Heart left ventricle (tissue), 16 donors: ENCODE measurements at regions of chr3 and their contacts with region 1.

Region 1: DNA sequence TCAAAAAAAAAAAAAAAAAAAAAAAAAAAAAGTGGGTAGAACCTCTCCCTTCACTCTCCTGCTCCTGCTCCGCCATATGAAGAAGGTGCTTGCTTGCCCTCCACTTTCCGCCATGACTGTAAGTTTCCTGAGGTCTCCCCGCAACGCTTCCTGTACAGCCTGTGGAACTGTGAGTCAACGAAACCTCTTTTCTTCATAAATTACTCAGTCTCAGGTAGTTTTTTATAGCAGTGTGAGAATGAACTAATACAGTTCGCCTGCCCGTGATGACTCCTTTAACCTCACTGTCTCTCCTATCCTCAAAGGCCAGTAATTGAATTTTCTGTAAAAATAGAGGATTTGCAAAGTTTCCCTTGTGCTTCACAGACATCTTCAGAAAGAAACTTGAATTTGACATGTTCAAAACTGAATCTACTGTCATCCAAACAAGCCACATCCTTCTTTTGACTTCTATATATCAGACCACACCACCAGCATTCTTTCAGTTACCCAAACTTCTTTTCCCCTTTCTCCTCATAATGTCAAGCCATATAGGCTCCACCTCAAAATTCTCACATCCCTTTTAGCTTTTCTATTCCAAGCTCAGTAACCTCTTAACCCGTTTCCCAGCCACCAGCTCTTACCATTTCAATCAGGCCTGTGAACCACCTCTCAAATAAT is 44.3 kb downstream of the P2RY1 start:
- DNase-seq: no peak
- ATAC-seq: no peak
- H3K4me3 ChIP-seq: no peak overlapping the region
- H3K27ac ChIP-seq: no peak overlapping the region
- H3K4me1 ChIP-seq: no peaks in the 10 kb centered on the region
- H3K27me3 ChIP-seq: no peaks in the 10 kb centered on the region
- CTCF ChIP-seq: no peak
- POLR2A ChIP-seq: no peak

Region 2: DNA sequence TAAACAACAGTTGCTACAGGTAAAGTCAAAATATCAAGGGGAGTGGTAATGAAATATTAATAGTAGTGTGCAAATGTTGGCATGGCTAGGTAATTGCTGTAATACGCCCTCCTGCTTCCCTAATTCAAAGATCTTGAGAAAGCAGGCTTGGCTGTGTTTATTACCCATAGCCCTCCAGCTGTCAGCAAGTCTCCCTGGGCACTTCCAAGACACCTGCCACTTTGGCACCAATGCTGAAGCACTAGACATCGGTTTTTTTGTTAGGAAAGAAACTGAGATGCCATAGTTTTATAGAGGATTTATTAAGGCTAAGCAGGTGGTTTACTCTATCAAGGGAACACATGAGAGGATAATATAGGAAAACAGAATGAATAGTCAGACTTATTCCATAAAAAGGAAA is 20.0 kb after region 1 on chr3:
- intact Hi-C with region 1: loop called in 1 of 10 experiments (anchors 1 kb)
- DNase-seq: no peak
- ATAC-seq: no peak
- H3K4me3 ChIP-seq: no peak overlapping the region
- H3K27ac ChIP-seq: no peak overlapping the region
- H3K4me1 ChIP-seq: no peaks in the 10 kb centered on the region
- H3K27me3 ChIP-seq: no peaks in the 10 kb centered on the region
- CTCF ChIP-seq: no peak
- POLR2A ChIP-seq: no peak